HepG2 (cell line): ENCODE measurements at regions of chr19 and their contacts with region 1.

Region 1: DNA sequence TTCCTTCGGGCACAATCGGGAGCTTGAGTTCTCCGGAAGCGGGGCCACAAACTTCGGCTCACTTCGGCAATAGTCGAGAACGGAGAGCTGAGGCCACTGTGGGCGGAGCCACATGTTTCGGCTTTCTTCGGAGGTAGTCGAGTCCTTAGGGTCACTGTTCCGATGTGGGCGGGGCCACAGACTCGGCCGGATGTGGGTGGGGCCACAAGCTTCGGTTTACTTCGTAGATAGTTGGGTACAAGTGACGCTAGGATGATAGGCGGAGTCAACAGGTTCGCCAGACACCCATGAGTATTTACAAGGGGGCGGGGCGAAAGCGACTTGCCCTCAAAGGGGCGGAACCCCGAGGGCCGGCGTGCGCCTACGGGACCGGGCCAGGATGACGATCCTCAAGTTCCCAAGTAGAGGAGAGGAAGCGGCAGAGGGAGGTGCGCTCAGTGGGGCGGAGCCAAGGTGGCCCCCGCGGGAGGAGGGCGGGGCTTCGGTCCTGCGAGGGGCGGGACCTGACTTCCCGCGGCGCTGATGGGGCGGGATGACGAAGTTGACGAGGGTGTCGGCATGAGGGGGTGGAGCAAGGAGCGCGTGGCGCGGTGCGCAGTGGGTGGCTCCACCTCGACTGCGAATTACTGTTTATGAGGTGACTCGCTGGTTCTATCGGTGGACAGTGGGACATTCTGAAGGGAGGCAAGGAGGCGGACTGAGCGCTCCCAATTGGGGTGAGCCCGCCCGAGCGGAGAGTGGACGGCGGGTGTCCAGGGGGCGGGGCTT is 539 bp upstream of the MBOAT7 start:
- DNase-seq: peak; percentile 100
- ATAC-seq: peak; percentile 66
- H3K4me3 ChIP-seq: peak overlapping the region; percentile 73 to 88 (median 74)
- H3K27ac ChIP-seq: peak overlapping the region; percentile 96
- H3K4me1 ChIP-seq: peaks cover 40% of the 10 kb centered on the region
- H3K27me3 ChIP-seq: no peaks in the 10 kb centered on the region
- CTCF ChIP-seq: no peak
- EP300 ChIP-seq: no peak
- POLR2A ChIP-seq: peak; percentile 81 to 84
- RAD21 ChIP-seq: no peak

Region 2: GRCh38 chr19:54137086-54137921 is 52.6 kb before region 1 on chr19 and contains the start of gene CNOT3:
- CTCF ChIA-PET with region 1: no interaction called
- POLR2A ChIA-PET with region 1: interaction called, 73 read pairs
- in situ Hi-C with region 1: no loop called
- intact Hi-C with region 1: no loop called
- DNase-seq: peak; percentile 100
- ATAC-seq: peak; percentile 88
- H3K4me3 ChIP-seq: peak within 1 kb of the TSS; percentile 74 to 86 (median 82)
- H3K27ac ChIP-seq: peak within 1 kb of the TSS; percentile 88
- H3K4me1 ChIP-seq: peaks cover 42% of the 10 kb centered on the region
- H3K27me3 ChIP-seq: no peaks in the 10 kb centered on the region; a peak in 1 of 5 replicates
- CTCF ChIP-seq: no peak
- EP300 ChIP-seq: no peak
- POLR2A ChIP-seq: peak; percentile 78 to 82
- RAD21 ChIP-seq: 0 out of 2 replicates have a peak, but pooled peaks have one; percentile 27
- total RNA-seq, gene CNOT3: 5.8 and 7.6 TPM in 2 replicates

Region 3: DNA sequence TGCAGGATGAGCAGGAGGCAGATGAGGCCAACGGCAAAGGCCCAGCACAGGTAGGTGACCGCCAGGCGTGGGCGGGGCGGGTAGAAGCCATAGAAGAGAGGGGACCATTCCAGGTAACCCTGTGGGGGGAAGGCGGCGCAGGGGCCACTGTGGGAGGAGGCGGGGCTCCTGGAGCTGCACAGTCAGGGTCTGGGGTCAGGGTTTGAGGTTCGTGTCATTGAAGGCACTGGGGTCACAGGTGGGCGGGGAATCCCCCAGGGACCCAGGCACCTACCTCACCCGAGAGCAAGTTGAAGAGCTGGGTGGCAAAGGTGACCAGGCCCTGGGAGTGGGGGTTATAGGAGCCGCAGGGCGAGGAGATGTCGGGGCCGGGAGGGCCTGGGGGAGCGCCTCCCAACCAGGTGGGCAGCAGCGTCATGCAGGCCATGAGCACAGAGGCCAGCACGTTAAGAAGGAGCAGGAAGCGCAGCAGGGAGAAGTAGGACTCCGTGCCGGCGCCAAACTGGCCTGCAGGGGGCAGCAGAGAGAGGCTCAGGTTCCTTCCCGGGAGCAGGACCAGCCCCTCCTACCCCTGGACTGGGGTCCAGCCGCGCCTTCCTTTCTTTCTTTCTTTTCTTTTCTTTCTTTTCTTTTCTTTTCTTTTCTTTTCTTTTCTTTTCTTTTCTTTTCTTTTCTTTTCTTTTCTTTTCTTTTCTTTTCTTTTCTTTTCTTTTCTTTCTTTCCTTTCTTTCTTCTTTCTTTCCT is 21.6 kb before region 1 on chr19:
- CTCF ChIA-PET with region 1: no interaction called
- POLR2A ChIA-PET with region 1: interaction called, 11 read pairs
- in situ Hi-C with region 1: no loop called
- intact Hi-C with region 1: no loop called
- DNase-seq: peak; percentile 71
- ATAC-seq: peak; percentile 87
- H3K4me3 ChIP-seq: peak overlapping the region in 1 of 3 experiments; percentile 30; a peak in 1 of 6 replicates
- H3K27ac ChIP-seq: no peak overlapping the region
- H3K4me1 ChIP-seq: peaks cover 12% of the 10 kb centered on the region; the same call in 1 of the 2 replicates
- H3K27me3 ChIP-seq: no peaks in the 10 kb centered on the region
- CTCF ChIP-seq: peak; percentile 88
- EP300 ChIP-seq: no peak
- POLR2A ChIP-seq: no peak
- RAD21 ChIP-seq: peak; percentile 42; the same call in 1 of the 2 replicates

Region 4: GRCh38 chr19:54209811-54210494 is 20.0 kb after region 1 on chr19:
- CTCF ChIA-PET with region 1: no interaction called
- POLR2A ChIA-PET with region 1: interaction called, 306 read pairs
- in situ Hi-C with region 1: no loop called
- intact Hi-C with region 1: loop called (anchors 2 kb)
- DNase-seq: peak; percentile 98
- ATAC-seq: peak; percentile 73
- H3K4me3 ChIP-seq: peak overlapping the region; percentile 11 to 55 (median 15); a peak in 4 of 6 replicates
- H3K27ac ChIP-seq: peak overlapping the region; percentile 80
- H3K4me1 ChIP-seq: peaks cover 68% of the 10 kb centered on the region
- H3K27me3 ChIP-seq: no peaks in the 10 kb centered on the region
- CTCF ChIP-seq: no peak
- EP300 ChIP-seq: peak; percentile 9 to 80; a peak in 3 of 4 replicates
- POLR2A ChIP-seq: peak; percentile 16 to 52; a peak in 3 of 4 replicates
- RAD21 ChIP-seq: no peak